Head of caudate nucleus (tissue), 42 donors: ENCODE measurements at regions of chr11 and their contacts with region 1.

Region 1: DNA sequence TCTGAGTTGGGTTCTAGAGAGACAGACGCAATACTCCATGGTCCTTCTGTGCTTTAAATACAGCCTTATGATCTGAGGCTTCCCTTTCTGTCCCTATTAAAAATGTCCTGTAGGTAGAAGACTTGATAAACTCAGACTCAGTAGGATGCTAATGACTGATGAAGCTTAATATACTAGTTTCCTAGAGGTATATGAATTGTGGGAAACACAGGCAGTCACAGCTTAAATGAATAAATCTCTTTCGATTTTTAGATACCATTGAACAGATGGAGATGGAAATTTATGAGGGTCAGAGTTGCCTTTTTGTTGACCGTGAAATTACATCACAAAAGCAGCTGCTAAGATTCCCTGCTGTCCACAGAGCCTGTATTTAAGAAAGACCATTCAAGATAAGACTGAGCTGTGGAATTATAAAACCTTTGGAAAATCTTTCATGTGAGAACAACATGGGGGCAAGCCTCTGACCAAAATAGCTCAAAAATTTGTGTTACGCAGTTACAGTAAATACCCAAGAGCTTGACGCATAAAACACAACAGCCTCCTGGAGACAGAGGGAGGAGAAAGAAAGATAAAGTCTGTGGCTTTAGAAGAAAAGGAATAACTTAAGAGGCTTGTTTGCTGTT is 172.3 kb downstream of the AASDHPPT start:
- DNase-seq: no peak

Region 2: GRCh38 chr11:106193966-106194365 is 55.8 kb before region 1 on chr11:
- intact Hi-C with region 1: no loop called
- DNase-seq: no peak

Region 3: DNA sequence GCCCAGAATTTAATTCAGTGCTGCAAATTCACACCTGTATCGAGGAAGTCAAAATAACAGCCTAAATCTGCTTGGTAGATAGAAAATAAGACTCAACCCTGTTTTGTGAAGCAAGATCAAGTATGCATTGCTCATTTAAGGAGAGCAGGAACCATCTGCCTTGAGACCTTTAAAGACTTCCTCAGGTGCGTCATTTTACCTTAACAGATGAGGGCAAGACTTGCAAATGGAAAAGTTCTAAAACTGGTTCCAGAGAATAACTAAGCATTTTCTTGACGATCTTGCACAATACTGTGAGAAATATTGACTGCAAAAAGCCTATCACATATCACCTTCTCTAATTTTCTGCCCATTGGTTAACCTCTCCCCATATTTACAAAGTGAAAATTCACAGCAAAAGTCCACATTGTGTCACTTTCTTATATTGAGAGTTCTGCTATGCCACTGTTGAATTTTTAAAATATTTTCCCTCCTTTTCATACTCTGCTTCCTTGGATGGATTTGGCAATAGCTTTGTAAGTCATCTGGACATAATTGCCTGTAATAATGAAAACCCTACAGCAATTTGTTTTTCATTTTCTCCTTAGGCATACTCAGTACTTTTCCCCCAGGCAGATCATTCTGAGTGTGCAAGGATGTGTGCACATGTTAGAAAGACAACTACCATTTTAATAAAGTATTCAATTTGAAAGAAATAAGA is 62.0 kb after region 1 on chr11:
- intact Hi-C with region 1: loop called (anchors 10 kb)
- DNase-seq: no peak

Region 4: GRCh38 chr11:106344394-106344793 is 94.7 kb after region 1 on chr11:
- intact Hi-C with region 1: no loop called
- DNase-seq: no peak